ENCODE measurements at regions of chr15 and their contacts with region 1.

Region 1: GRCh38 chr15:40274350-40275274 is 8.3 kb downstream of the ANKRD63 start:
- DNase-seq: peak; percentile 93
- ATAC-seq: peak; percentile 79
- H3K4me3 Mint-ChIP-seq: no peak overlapping the region
- H3K27ac Mint-ChIP-seq: no peak overlapping the region
- H3K4me1 Mint-ChIP-seq: no peaks in the 10 kb centered on the region
- H3K27me3 Mint-ChIP-seq: peaks cover 14% of the 10 kb centered on the region

Region 2: GRCh38 chr15:39686000-39686613 is 588.5 kb before region 1 on chr15:
- CTCF ChIA-PET with region 1: interaction called, 4 read pairs
- POLR2A ChIA-PET with region 1: no interaction called
- intact Hi-C with region 1: loop called (anchors 5 to 10 kb)
- DNase-seq: peak; percentile 46
- ATAC-seq: no peak
- H3K4me3 Mint-ChIP-seq: no peak overlapping the region
- H3K27ac Mint-ChIP-seq: no peak overlapping the region
- H3K4me1 Mint-ChIP-seq: peaks cover 1% of the 10 kb centered on the region
- H3K27me3 Mint-ChIP-seq: no peaks in the 10 kb centered on the region

Region 3: GRCh38 chr15:40044717-40045571 is 229.7 kb before region 1 on chr15:
- CTCF ChIA-PET with region 1: interaction called, 43 read pairs
- POLR2A ChIA-PET with region 1: no interaction called
- intact Hi-C with region 1: loop called (anchors 1 kb)
- DNase-seq: peak; percentile 94
- ATAC-seq: peak; percentile 75
- H3K4me3 Mint-ChIP-seq: peak overlapping the region; percentile 46
- H3K27ac Mint-ChIP-seq: peak overlapping the region; percentile 47
- H3K4me1 Mint-ChIP-seq: peaks cover 76% of the 10 kb centered on the region
- H3K27me3 Mint-ChIP-seq: no peaks in the 10 kb centered on the region

Region 4: DNA sequence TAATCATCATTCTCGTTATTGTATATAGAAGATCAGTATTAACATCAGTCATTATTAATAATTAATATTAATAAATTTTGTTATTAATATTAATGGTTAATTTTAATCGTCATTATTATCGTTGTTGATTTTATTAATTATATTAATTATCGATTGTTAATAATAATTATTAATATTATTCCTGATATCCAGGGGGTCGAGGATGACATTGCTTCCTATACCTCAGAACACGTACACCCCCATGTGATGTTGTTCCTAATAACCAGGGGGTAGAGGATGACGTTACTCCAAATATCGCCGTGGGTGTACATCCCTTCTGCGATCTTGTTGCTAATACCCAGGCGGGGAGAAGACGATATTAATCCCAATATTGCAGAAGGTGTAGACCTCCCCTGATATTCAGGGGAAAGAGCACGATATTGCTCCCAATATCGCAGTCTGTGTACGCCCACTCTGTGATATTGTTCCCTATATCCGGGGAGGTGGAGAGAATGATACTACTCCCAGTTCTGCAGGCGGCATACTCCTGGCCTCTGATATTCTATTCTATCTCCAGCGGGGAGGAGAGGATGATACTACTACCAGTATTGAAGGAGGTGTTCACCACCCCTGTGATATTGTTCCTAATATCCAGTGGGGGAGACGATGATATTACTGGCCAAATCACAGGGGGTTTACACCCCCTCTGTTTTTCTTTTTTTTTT is 143.7 kb before region 1 on chr15:
- CTCF ChIA-PET with region 1: no interaction called
- POLR2A ChIA-PET with region 1: no interaction called
- intact Hi-C with region 1: no loop called
- DNase-seq: no peak
- ATAC-seq: peak; percentile 13
- H3K4me3 Mint-ChIP-seq: no peak overlapping the region
- H3K27ac Mint-ChIP-seq: no peak overlapping the region
- H3K4me1 Mint-ChIP-seq: no peaks in the 10 kb centered on the region
- H3K27me3 Mint-ChIP-seq: no peaks in the 10 kb centered on the region

Region 5: DNA sequence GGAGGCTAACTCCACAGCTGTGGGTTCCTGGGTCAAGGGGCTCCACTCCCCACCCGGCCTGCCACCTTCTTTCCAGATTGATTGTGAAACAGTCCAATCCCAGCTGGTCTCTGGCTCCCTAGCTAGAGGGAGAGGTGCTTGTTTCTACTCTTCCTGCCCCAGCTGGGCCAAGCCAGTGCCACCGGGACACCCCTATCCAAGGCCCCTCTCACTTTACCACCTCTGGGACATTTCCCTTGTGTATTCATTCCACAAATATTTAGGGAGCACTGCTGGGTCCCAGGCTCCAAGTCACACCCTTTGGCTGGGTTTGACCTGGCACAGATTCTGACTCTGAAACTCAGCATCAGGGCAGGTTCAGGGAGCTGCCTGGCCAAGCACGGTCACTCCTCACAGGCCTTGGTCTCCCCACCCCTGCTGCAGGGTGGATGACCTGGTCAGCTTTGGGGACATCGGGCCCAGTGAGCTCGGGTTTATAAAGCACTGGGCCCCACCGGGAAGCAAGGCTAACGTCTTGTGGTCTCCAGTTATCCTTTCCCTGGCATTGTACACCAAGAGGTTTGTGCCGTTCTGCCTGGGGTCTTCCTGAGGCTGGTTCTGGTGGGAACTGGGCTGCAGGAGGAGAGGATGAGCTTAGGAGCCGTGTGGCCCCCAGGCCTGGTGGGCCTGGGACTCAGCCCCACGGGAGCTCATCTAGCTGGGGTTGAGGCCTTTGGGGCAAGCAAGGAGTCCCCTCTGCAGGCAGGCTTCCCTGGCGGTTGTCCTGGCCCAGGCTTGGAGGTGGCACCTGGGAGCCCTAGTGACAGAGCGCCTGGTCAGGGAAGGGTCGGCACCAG is 33.6 kb before region 1 on chr15:
- CTCF ChIA-PET with region 1: interaction called, 17 read pairs
- POLR2A ChIA-PET with region 1: no interaction called
- intact Hi-C with region 1: no loop called
- DNase-seq: no peak
- ATAC-seq: no peak
- H3K4me3 Mint-ChIP-seq: no peak overlapping the region
- H3K27ac Mint-ChIP-seq: no peak overlapping the region
- H3K4me1 Mint-ChIP-seq: peaks cover 7% of the 10 kb centered on the region
- H3K27me3 Mint-ChIP-seq: peaks cover 15% of the 10 kb centered on the region

Region 6: DNA sequence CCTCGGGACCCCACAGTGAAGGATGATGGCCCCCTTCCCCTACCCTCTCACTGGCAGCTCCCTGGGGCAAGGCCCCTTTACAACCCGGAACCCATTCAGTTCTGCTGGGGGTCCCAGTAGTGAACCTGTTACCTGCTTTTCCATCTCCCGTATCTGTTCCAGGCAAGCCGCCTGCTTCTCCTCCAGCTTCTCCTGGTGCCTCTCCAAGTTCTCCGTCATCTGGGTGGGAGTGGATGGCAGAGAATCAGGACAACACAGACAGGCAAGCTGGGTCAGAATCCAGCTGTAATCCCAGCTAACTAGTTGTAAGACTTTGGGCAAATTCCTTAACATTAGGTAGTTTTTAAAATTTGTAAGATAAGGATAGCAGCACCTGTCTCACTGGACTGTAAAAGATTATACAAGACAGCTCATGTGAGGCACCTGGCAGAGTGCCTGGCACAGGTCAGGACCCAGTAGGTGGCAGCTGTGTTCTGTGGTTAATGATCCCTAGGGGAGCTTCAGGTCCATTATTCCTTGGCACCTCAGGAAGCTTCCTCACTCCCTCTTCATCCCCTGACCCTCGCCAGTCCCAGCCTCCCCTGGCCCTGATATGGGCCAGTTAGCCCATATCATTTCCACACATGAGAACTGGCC is 14.6 kb after region 1 on chr15:
- CTCF ChIA-PET with region 1: interaction called, 14 read pairs
- POLR2A ChIA-PET with region 1: no interaction called
- intact Hi-C with region 1: no loop called
- DNase-seq: no peak
- ATAC-seq: no peak
- H3K4me3 Mint-ChIP-seq: no peak overlapping the region
- H3K27ac Mint-ChIP-seq: no peak overlapping the region
- H3K4me1 Mint-ChIP-seq: peaks cover 4% of the 10 kb centered on the region
- H3K27me3 Mint-ChIP-seq: no peaks in the 10 kb centered on the region

Region 7: GRCh38 chr15:40338041-40338657 is 63.5 kb after region 1 on chr15:
- CTCF ChIA-PET with region 1: interaction called, 88 read pairs
- POLR2A ChIA-PET with region 1: no interaction called
- intact Hi-C with region 1: loop called (anchors 1 kb)
- DNase-seq: peak; percentile 90
- ATAC-seq: peak; percentile 90
- H3K4me3 Mint-ChIP-seq: no peak overlapping the region
- H3K27ac Mint-ChIP-seq: no peak overlapping the region
- H3K4me1 Mint-ChIP-seq: peaks cover 16% of the 10 kb centered on the region
- H3K27me3 Mint-ChIP-seq: no peaks in the 10 kb centered on the region